ENCODE measurements at regions of chr20 and their contacts with region 1.

Region 1: DNA sequence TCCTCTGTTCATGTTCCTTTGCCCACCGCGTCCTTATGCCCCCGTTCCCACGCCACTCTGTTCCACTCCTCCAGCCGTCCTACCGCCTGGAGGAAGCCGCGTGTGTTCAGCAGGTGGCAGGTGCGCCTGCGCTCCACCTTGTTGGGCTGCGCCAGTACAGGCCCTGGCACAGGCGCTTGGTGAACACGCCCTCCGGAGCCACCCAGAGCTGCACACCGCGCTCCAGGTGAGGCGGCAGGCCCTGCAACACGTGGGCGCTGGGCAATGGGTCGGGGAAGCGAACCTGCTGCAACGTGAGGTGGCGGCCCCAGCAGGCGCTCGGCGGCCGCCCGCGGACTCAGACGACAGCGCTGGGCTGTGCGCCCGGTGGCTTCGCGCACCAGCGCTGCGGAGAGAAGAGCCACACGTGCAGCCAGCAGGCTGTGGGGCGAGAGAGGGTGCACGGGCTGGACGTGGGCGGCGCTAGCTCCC is 4.1 kb upstream of the FOXS1 start:
- DNase-seq: no peak
- ATAC-seq: no peak
- H3K4me3 Mint-ChIP-seq: no peak overlapping the region
- H3K27ac Mint-ChIP-seq: no peak overlapping the region
- H3K4me1 Mint-ChIP-seq: no peaks in the 10 kb centered on the region
- H3K27me3 Mint-ChIP-seq: peaks cover 23% of the 10 kb centered on the region

Region 2: DNA sequence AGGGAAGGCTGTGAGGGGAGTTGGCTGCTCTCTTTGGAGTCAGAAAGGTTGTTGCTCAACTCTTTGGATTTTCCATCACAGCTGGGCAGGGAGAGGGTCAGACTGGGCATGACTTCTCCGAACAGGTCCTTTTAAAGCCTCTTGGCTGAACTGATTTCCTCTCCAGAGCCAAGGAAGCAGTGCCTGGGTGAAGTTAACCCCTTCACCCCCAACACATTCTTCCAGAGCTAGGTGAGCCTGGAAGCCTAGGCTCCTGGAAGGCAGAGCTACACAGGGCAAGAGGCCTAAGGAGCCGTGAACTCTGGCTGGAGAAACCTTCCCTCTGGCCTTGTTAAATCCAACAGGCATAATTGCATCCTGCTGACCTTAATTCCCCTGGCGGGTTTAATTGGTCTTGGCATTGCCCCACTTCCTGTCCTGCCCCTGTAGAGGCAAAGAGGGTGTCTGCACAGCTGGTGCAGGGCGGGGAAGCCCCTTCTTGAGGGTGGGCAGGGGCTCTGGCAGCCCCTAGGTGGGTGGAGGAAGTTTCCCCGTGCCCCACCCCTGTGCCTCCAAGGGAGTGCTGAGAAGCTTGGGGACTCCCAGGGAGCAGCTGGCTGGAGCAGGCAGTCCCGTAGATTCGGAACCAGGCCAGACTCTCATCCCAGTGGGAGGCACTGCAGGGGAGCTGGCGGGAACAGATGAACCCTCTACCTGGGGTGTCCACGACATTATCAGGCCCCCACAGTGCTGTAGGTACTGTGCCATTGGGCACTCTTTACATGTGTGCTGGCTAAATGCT is 33.9 kb before region 1 on chr20:
- CTCF ChIA-PET with region 1: interaction called, 110 read pairs
- DNase-seq: no peak
- ATAC-seq: no peak
- H3K4me3 Mint-ChIP-seq: no peak overlapping the region
- H3K27ac Mint-ChIP-seq: no peak overlapping the region
- H3K4me1 Mint-ChIP-seq: no peaks in the 10 kb centered on the region
- H3K27me3 Mint-ChIP-seq: no peaks in the 10 kb centered on the region

Region 3: GRCh38 chr20:31829731-31830130 is 19.8 kb before region 1 on chr20:
- CTCF ChIA-PET with region 1: interaction called, 110 read pairs
- DNase-seq: no peak
- ATAC-seq: no peak
- H3K4me3 Mint-ChIP-seq: no peak overlapping the region
- H3K27ac Mint-ChIP-seq: no peak overlapping the region
- H3K4me1 Mint-ChIP-seq: no peaks in the 10 kb centered on the region
- H3K27me3 Mint-ChIP-seq: peaks cover under 1% of the 10 kb centered on the region

Region 4: DNA sequence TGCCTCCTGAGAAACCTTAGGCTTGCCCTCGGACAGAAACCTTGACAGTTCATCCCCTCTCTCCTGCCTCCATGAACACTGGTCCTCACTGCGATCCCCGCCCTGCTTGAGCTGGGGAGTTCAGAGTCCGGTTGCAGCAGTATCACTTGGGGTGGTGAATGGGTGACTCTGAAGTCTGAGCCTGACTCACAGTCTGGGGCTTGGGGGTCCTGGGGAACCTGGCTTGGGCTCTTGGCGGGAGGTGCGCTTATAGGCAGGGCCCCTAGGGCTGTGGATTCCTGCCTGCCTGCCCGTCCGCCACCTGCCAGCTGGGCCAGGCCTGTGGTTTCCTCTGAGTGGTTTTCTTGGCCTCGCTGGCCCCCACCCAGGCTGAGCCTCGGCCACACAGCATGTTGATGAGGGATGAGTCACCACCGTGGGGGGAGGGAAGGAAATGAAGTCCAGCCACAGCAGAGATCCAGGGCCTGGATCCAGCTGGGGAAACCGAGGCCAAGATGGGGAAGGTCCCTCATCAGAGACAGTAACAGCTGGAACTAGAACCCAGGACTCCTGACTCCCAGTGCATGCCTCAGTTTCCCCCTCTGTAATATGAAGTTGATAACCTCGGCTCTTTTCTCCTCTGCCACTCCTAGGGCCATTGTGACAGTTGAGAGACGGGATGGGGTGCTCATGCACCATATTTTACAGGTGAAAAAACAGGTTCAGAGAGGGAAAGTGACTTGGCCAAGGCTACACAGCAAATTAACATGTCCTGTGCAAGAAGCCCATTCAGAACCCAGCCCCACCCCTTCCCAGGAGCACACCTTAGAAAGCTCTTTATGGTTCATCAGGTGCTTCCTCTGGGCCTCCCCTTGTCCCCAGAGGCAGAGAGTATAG is 13.3 kb before region 1 on chr20:
- CTCF ChIA-PET with region 1: interaction called, 30 read pairs
- DNase-seq: peak; percentile 77
- ATAC-seq: peak; percentile 61
- H3K4me3 Mint-ChIP-seq: no peak overlapping the region
- H3K27ac Mint-ChIP-seq: no peak overlapping the region
- H3K4me1 Mint-ChIP-seq: peaks cover 25% of the 10 kb centered on the region
- H3K27me3 Mint-ChIP-seq: peaks cover 10% of the 10 kb centered on the region

Region 5: DNA sequence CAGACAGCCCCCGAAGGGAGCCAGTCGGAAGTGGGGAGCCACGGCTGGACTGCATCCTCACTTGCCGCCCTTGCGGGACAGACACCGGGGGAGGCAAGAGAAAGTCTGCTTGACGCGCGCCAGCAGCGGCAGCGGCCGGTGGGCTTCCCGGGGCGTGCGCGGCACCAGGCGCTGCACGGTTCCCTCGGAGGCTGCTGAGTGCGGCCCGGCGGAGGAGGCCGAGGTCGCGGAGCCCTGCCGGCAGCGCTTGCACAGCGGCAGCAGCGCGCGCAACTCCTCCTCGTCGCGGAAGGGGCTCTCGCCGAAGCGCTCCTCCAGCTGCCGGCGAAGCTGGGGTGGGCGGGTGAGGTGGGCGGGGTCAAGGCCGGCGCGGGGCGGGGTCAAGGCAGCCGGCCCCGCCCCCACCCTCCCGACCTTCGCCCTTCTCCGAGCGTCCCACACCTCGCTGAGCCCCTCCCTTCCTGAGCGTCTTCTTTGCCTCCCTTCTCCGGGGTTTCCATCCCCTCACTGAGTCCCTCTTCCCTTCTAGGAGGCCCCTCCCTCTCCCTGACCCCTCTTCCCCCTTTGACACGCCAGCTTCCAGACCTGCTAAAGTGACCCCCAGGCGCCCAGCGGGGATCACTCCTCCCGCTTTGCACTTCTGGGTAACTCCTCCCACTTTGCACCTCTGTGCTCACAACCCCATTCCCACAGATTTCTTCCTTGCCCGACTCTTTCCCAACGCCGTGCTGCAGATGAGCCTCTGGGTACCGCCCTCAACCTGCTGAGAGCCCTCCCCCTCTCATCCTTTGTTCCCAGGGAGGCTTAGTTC is 12.1 kb after region 1 on chr20:
- CTCF ChIA-PET with region 1: interaction called, 16 read pairs
- DNase-seq: peak; percentile 80
- ATAC-seq: peak; percentile 94
- H3K4me3 Mint-ChIP-seq: peak overlapping the region; percentile 4
- H3K27ac Mint-ChIP-seq: no peak overlapping the region
- H3K4me1 Mint-ChIP-seq: peaks cover 8% of the 10 kb centered on the region
- H3K27me3 Mint-ChIP-seq: peaks cover 34% of the 10 kb centered on the region

Measured in activated CD8-positive, alpha-beta memory T cell treated with anti-CD3 and anti-CD28 coated beads, Interleukin-2, amount 10 ng/mL, durations not matched to agents 7 days and 5 days (primary cell).